ENCODE measurements at regions of chr17 and their contacts with region 1.

Region 1: DNA sequence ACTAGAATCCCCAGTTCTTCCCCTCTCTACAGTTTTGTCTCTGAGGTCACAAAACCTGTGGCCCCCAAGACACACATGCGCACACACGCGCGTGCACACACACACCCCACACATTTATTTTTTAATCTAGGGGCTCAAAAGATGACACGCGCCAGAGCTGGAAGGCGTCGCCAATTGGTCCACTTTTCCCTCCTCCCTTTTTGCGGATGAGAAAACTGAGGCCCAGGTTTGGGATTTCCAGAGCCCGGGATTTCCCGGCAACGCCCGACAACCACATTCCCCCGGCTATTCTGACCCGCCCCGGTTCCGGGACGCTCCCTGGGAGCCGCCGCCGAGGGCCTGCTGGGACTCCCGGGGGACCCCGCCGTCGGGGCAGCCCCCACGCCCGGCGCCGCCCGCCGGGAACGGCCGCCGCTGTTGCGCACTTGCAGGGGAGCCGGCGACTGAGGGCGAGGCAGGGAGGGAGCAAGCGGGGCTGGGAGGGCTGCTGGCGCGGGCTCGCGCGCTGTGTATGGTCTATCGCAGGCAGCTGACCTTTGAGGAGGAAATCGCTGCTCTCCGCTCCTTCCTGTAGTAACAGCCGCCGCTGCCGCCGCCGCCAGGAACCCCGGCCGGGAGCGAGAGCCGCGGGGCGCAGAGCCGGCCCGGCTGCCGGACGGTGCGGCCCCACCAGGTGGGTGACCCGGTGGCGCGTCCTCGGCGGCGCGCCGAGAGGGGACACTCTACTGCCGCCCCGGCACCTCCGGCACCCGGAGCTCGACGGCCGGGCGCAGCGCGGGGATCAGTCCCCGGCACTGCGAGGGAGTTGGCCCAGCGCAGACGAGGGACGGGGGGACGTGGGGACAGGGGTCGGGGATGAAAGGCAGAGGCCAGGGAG is at the start of gene STAT5A:
- DNase-seq: peak; percentile 67 to 89 (median 78)
- ATAC-seq: peak; percentile 78 to 85
- H3K4me3 Mint-ChIP-seq: peak within 1 kb of the TSS; percentile 88 to 97 (median 92)
- H3K27ac Mint-ChIP-seq: peak within 1 kb of the TSS; percentile 94 to 99 (median 96)
- H3K4me1 Mint-ChIP-seq: peaks cover 27 to 60% (median 54%) of the 10 kb centered on the region in 4 donors
- H3K27me3 Mint-ChIP-seq: no peaks in the 10 kb centered on the region
- polyA plus RNA-seq, gene STAT5A: 59.6 to 115 (median 89.1) TPM

Region 2: GRCh38 chr17:42193969-42194899 is 93.9 kb before region 1 on chr17 and contains the start of gene GHDC:
- POLR2A ChIA-PET with region 1: interaction called, 16 read pairs
- DNase-seq: peak; percentile 57 to 88 (median 74)
- ATAC-seq: peak; percentile 96 to 98
- H3K4me3 Mint-ChIP-seq: peak within 1 kb of the TSS; percentile 86 to 99 (median 96)
- H3K27ac Mint-ChIP-seq: peak within 1 kb of the TSS; percentile 84 to 96 (median 94)
- H3K4me1 Mint-ChIP-seq: peaks cover 16 to 35% (median 30%) of the 10 kb centered on the region in 4 donors
- H3K27me3 Mint-ChIP-seq: no peaks in the 10 kb centered on the region
- polyA plus RNA-seq, gene GHDC: 15.3 to 21.5 (median 17.3) TPM

Region 3: GRCh38 chr17:42240212-42240884 is 47.8 kb before region 1 on chr17:
- POLR2A ChIA-PET with region 1: interaction called, 10 read pairs
- DNase-seq: no peak
- ATAC-seq: no peak
- H3K4me3 Mint-ChIP-seq: no peak overlapping the region
- H3K27ac Mint-ChIP-seq: peak overlapping the region in 7 of 10 donors; percentile 6 to 65 (median 17)
- H3K4me1 Mint-ChIP-seq: peaks cover 13 to 58% (median 42%) of the 10 kb centered on the region in 4 donors
- H3K27me3 Mint-ChIP-seq: no peaks in the 10 kb centered on the region

Region 4: GRCh38 chr17:42266918-42267778 is 21.0 kb before region 1 on chr17:
- POLR2A ChIA-PET with region 1: interaction called, 25 read pairs
- DNase-seq: peak in 3 of 10 donors; percentile 17 to 54 (median 43)
- ATAC-seq: peak; percentile 75 to 91
- H3K4me3 Mint-ChIP-seq: peak overlapping the region in 3 of 10 donors; percentile 14 to 22 (median 19)
- H3K27ac Mint-ChIP-seq: peak overlapping the region; percentile 26 to 98 (median 70)
- H3K4me1 Mint-ChIP-seq: peaks cover 10 to 63% (median 55%) of the 10 kb centered on the region in 4 donors
- H3K27me3 Mint-ChIP-seq: no peaks in the 10 kb centered on the region

Region 5: DNA sequence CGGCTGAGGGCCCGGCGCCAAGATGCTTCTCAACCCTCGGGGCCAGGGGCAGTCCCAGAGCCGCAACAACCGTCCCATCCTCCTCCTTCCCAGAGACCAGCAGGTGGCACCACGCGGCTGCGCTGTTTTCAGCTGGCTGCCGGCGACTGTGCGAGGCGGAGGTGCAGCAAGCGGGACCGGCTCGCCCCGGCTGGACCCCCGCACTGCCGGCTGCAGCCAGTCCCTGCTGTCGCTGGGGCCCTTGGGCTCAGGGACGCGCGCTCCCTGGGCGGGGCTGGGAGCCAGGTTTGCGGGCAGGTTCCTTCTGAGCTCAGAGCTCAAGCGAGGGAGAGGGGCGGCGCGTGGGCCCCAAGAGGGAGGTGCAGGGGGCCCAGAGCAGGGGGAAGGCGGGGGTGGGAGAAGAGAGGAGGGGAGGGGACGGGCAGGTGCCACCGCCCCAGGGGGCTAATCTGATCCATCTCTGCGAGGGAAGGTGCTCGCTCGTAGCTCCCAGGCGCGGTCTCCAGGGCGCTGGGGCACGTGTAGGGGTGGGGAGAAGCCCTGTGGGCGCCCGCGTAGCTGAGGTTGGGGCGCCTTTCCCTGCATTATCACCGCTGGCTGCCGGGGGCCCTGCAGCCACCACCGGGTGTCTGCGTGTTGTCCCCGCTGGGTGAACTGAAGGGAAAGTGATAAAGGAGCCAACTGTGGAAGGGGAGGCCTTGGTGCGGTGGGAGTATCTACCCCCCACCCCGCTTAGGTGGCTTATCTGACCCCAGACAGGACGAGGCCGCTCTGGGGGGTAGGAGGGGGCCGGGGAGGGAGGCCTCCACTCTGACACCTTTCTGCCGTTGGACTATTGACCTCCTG is 24.3 kb after region 1 on chr17:
- POLR2A ChIA-PET with region 1: interaction called, 62 read pairs
- DNase-seq: peak; percentile 66 to 87 (median 74)
- ATAC-seq: peak; percentile 72 to 73
- H3K4me3 Mint-ChIP-seq: peak overlapping the region; percentile 61 to 86 (median 74)
- H3K27ac Mint-ChIP-seq: peak overlapping the region; percentile 84 to 93 (median 90)
- H3K4me1 Mint-ChIP-seq: peaks cover 32 to 80% (median 66%) of the 10 kb centered on the region in 4 donors
- H3K27me3 Mint-ChIP-seq: no peaks in the 10 kb centered on the region

Region 6: DNA sequence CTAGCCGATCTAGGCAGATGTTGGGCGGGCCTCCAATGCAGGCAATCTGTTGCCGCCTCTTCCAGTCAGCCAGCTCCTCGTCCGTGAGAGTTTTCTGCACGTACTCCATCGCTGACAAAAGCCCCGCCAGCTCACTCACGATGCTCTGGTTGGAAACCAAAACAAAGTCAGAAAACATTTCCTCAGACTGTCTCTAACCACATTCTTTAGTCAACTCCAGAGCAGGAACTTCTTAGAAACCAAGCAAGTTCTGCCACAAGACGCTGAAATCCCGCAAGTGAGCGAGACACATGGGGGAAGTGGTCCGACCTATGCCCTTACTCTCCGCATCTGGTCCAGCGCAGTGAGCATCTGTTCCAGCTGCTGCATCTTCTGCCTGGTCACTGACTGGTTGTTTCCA is 49.3 kb after region 1 on chr17:
- POLR2A ChIA-PET with region 1: no interaction called
- DNase-seq: peak; percentile 30 to 84 (median 64)
- ATAC-seq: peak; percentile 89 to 94
- H3K4me3 Mint-ChIP-seq: peak overlapping the region; percentile 44 to 80 (median 68)
- H3K27ac Mint-ChIP-seq: peak overlapping the region; percentile 69 to 98 (median 94)
- H3K4me1 Mint-ChIP-seq: peaks cover 13 to 41% (median 34%) of the 10 kb centered on the region in 4 donors
- H3K27me3 Mint-ChIP-seq: no peaks in the 10 kb centered on the region

Region 7: GRCh38 chr17:42381898-42382297 is 93.7 kb after region 1 on chr17:
- POLR2A ChIA-PET with region 1: no interaction called
- DNase-seq: no peak
- ATAC-seq: no peak
- H3K4me3 Mint-ChIP-seq: peak overlapping the region in 1 of 10 donors; percentile 11
- H3K27ac Mint-ChIP-seq: peak overlapping the region in 8 of 10 donors; percentile 4 to 80 (median 50)
- H3K4me1 Mint-ChIP-seq: peaks cover 31 to 82% (median 80%) of the 10 kb centered on the region in 4 donors
- H3K27me3 Mint-ChIP-seq: no peaks in the 10 kb centered on the region